CD4-positive, alpha-beta memory T cell (primary cell): ENCODE measurements at regions of chr12 and their contacts with region 1.

Region 1: GRCh38 chr12:22624870-22625761 is at the start of gene ETNK1:
- DNase-seq: peak; percentile 76 to 85 (median 81)
- H3K4me3 ChIP-seq: peak within 1 kb of the TSS; percentile 80 to 93
- H3K4me3 Mint-ChIP-seq: peak within 1 kb of the TSS; percentile 92 to 99 (median 93)
- H3K27ac ChIP-seq: peak within 1 kb of the TSS; percentile 80
- H3K27ac Mint-ChIP-seq: peak within 1 kb of the TSS; percentile 93 to 99 (median 98)
- H3K4me1 ChIP-seq: peaks cover 36% of the 10 kb centered on the region
- H3K4me1 Mint-ChIP-seq: peaks cover 25 to 50% (median 38%) of the 10 kb centered on the region in 4 donors
- H3K27me3 ChIP-seq: no peaks in the 10 kb centered on the region
- H3K27me3 Mint-ChIP-seq: peaks cover 0 to 3% of the 10 kb centered on the region in 2 donors
- total RNA-seq, gene ETNK1: 81.1 to 88.1 TPM

Region 2: DNA sequence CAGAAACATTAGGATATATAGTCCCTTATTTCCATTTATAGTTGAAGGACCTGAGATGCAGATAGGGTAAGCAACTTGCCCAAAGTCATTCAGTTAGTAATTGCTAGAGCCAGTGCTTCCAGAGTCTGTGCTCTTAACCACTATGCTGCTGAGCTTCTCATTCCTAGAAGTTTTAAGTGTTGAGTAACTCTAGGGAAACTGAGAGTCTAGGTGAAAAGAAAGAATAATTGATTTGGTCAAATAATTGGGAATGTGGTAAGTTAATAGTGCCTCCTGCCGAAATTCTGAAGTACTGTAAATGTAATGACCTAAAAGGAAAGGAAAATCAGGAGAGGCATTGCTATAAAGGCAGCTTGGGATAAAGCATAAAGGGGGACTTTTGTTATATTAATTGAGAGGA is 1173.6 kb before region 1 on chr12:
- CTCF ChIA-PET with region 1: no interaction called
- POLR2A ChIA-PET with region 1: no interaction called
- intact Hi-C with region 1: loop called (anchors 10 kb)
- DNase-seq: no peak
- H3K4me3 ChIP-seq: no peak overlapping the region
- H3K4me3 Mint-ChIP-seq: peak overlapping the region in 1 of 8 donors; percentile 53
- H3K27ac ChIP-seq: no peak overlapping the region
- H3K27ac Mint-ChIP-seq: peak overlapping the region in 5 of 7 donors; percentile 2 to 88 (median 67)
- H3K4me1 ChIP-seq: peaks cover 40% of the 10 kb centered on the region
- H3K4me1 Mint-ChIP-seq: peaks cover 27 to 43% (median 37%) of the 10 kb centered on the region in 4 donors
- H3K27me3 ChIP-seq: no peaks in the 10 kb centered on the region
- H3K27me3 Mint-ChIP-seq: no peaks in the 10 kb centered on the region

Region 3: DNA sequence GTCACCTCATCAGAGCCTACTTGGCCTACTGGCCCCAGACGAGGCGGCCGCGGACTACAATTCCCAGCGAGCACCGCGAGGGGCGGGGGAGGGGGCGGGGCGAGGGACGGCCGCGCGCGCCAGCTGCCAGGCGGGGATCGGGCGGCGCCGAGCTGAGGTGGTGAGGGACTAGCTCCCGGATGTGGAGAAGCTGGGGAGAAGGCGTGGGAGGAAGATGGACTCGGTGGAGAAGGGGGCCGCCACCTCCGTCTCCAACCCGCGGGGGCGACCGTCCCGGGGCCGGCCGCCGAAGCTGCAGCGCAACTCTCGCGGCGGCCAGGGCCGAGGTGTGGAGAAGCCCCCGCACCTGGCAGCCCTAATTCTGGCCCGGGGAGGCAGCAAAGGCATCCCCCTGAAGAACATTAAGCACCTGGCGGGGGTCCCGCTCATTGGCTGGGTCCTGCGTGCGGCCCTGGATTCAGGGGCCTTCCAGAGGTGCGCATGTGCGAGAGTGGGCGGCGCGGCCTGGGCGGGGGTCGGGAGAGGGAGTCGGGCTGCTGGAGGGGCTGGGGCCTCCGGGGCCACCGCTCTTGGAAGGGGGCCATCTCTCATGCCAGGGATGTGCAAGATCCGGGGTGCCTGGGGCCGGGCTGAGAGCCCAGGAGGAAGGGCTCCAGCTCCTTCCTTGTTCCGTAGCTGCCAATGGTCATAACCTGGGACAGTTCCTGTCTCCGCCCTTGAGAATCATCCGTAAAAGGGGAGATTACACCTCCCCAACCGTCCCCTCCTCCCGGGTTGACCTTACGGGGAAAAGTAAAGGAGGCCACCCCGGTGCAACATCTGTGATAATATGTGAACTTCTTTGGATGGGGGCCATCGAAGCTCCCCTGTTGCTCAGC is 578.8 kb before region 1 on chr12 and contains the start of gene CMAS:
- CTCF ChIA-PET with region 1: no interaction called
- POLR2A ChIA-PET with region 1: interaction called, 3 read pairs
- intact Hi-C with region 1: loop called (anchors 5 kb)
- DNase-seq: peak; percentile 63 to 81 (median 71)
- H3K4me3 ChIP-seq: peak within 1 kb of the TSS; percentile 87 to 91
- H3K4me3 Mint-ChIP-seq: peak within 1 kb of the TSS; percentile 90 to 98 (median 96)
- H3K27ac ChIP-seq: peak within 1 kb of the TSS; percentile 75
- H3K27ac Mint-ChIP-seq: peak within 1 kb of the TSS; percentile 85 to 95 (median 91)
- H3K4me1 ChIP-seq: peaks cover 35% of the 10 kb centered on the region
- H3K4me1 Mint-ChIP-seq: peaks cover 33 to 50% (median 39%) of the 10 kb centered on the region in 4 donors
- H3K27me3 ChIP-seq: no peaks in the 10 kb centered on the region
- H3K27me3 Mint-ChIP-seq: peaks cover 0 to 1% of the 10 kb centered on the region in 2 donors
- total RNA-seq, gene CMAS: 20.1 to 20.3 TPM

Region 4: GRCh38 chr12:22529281-22530060 is 95.6 kb before region 1 on chr12:
- CTCF ChIA-PET with region 1: interaction called, 19 read pairs
- POLR2A ChIA-PET with region 1: no interaction called
- intact Hi-C with region 1: loop called (anchors 1 kb)
- DNase-seq: peak in 4 of 5 donors; percentile 42 to 54 (median 51)
- H3K4me3 ChIP-seq: no peak overlapping the region
- H3K4me3 Mint-ChIP-seq: no peak overlapping the region
- H3K27ac ChIP-seq: no peak overlapping the region
- H3K27ac Mint-ChIP-seq: no peak overlapping the region
- H3K4me1 ChIP-seq: no peaks in the 10 kb centered on the region
- H3K4me1 Mint-ChIP-seq: peaks cover 8 to 18% (median 12%) of the 10 kb centered on the region in 4 donors
- H3K27me3 ChIP-seq: no peaks in the 10 kb centered on the region
- H3K27me3 Mint-ChIP-seq: no peaks in the 10 kb centered on the region

Region 5: DNA sequence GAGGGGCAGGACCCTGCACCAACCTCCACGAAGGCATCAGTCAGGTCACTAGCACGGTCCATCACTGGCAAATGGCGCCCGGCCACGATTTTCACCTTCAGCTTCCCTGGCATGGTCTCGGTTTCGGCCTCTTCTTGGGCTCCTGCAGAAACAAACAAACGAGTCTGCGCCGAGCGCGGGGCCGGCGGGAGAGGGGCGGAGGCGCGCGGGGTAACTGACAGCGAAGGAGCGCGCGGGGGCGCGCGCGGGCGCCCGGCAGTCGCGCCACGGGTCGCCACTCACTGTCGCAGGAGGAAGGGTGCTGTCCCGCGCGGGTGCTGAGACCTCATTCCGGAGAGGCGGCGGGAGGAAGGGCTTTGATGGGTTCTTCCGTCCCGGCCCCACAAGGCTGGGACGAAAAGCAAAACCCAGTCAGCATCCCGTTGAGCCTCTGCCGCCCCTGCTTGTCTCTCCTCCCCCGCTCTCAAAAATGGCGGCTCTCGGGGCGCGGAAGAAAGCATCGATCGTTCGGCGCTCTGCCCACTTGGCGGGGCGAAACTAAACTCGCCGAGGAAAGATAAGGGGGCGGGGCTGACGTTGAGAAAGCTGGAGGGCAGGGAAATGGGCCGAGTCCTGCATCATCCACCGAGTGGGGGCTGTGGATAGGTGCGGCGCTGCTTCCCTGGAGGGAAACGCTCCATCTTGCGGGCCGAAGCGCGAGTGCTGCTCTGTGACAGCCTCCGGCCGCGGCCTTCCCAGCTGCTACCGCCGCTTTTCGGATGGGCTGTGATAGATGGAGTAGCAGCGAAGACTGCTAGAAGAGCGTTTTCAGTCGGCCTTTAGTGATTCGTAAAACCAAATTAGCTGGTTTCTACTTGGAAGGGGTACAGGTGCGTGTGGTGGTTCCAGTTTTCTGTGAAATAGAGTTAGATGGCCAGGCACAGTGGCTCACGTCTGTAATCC is 80.8 kb before region 1 on chr12 and contains the start of gene C2CD5:
- CTCF ChIA-PET with region 1: interaction called, 4 read pairs
- POLR2A ChIA-PET with region 1: interaction called, 74 read pairs
- intact Hi-C with region 1: loop called (anchors 1 kb)
- DNase-seq: peak; percentile 95 to 98 (median 96)
- H3K4me3 ChIP-seq: peak within 1 kb of the TSS; percentile 87 to 97
- H3K4me3 Mint-ChIP-seq: peak within 1 kb of the TSS; percentile 89 to 98 (median 94)
- H3K27ac ChIP-seq: peak within 1 kb of the TSS; percentile 78
- H3K27ac Mint-ChIP-seq: peak within 1 kb of the TSS; percentile 95 to 97 (median 96)
- H3K4me1 ChIP-seq: peaks cover 44% of the 10 kb centered on the region
- H3K4me1 Mint-ChIP-seq: peaks cover 29 to 45% (median 36%) of the 10 kb centered on the region in 4 donors
- H3K27me3 ChIP-seq: no peaks in the 10 kb centered on the region
- H3K27me3 Mint-ChIP-seq: peaks cover 0 to 4% of the 10 kb centered on the region in 2 donors
- total RNA-seq, gene C2CD5: 59.3 to 59.8 TPM

Region 6: DNA sequence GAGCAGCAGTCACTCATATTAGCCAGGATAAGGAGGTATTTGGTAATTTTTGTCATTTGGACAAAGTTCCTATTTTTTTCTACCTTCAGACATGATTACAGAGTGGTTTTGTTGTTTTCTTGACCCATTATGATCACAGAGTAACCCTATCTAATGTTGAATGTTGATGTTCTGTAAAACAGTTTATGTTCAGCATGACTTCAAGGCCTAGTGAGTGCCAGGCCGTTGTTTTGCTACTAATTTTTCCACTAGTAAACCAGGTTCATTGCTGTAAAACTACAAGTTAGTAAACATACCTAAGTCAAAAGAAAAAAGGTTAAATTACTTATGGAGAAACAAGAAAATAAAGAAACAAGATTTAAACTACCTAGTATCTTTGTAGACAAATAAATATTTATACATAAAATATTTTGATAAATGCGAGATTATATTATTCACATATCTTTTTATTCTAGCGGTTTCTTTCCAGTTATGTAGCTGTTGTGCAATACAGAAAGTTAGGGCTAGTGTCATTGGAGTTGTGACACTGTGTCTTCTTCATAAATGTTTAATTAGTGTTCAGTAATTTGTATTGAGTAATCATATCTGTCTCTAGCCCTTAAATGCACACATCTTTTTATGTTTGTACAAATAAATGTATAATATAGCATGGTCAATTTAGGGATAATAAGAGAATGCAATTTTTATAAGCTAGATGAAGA is 16.4 kb after region 1 on chr12:
- CTCF ChIA-PET with region 1: no interaction called
- POLR2A ChIA-PET with region 1: no interaction called
- intact Hi-C with region 1: loop called (anchors 2 kb)
- DNase-seq: no peak
- H3K4me3 ChIP-seq: no peak overlapping the region
- H3K4me3 Mint-ChIP-seq: peak overlapping the region in 2 of 8 donors; percentile 39 to 49
- H3K27ac ChIP-seq: no peak overlapping the region
- H3K27ac Mint-ChIP-seq: peak overlapping the region in 1 of 7 donors; percentile 83
- H3K4me1 ChIP-seq: peaks cover 21% of the 10 kb centered on the region
- H3K4me1 Mint-ChIP-seq: peaks cover 29 to 47% (median 36%) of the 10 kb centered on the region in 4 donors
- H3K27me3 ChIP-seq: no peaks in the 10 kb centered on the region
- H3K27me3 Mint-ChIP-seq: no peaks in the 10 kb centered on the region